GM10248 (cell line): ENCODE measurements at regions of chr10 and their contacts with region 1.

Region 1: GRCh38 chr10:4849555-4850242 is 23.7 kb downstream of the AKR1E2 start:
- DNase-seq: peak; percentile 65
- CTCF ChIP-seq: peak; percentile 100

Region 2: DNA sequence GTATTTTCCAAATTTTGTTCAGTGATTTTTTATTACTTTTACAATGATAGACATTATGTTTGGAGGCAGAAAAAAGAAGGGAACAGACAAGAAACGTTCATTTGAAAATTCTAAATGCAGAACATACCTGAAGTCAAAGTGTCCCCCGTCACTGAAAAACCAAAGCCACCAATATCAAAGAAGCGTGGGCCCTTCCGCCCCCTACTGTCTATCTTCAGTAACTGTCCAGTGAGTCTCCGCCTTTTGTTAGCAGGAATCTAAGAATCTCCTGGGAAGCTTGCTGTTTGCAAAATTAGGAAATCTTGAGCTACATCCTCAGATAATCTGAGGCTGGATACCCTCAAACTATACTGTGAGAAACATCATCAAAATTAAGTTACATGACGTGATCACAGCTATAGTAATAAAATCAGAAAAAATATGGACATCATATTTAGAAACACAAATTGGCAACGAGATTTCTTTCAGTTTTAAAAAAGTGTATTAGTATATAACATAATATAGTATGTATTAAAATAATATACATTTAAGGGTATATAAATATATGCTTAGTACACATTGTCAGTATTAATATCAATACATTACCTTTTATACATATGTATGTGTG is 193.0 kb before region 1 on chr10:
- CTCF ChIA-PET with region 1: no interaction called
- POLR2A ChIA-PET with region 1: no interaction called
- DNase-seq: peak; percentile 38
- CTCF ChIP-seq: peak; percentile 75

Region 3: GRCh38 chr10:4825851-4826665 is 23.6 kb before region 1 on chr10 and contains the start of gene AKR1E2:
- CTCF ChIA-PET with region 1: interaction called, 112 read pairs
- POLR2A ChIA-PET with region 1: no interaction called
- DNase-seq: peak; percentile 39
- CTCF ChIP-seq: no peak

Region 4: GRCh38 chr10:4892681-4893080 is 43.0 kb after region 1 on chr10:
- CTCF ChIA-PET with region 1: interaction called, 15 read pairs
- POLR2A ChIA-PET with region 1: no interaction called
- DNase-seq: no peak
- CTCF ChIP-seq: no peak

Region 5: GRCh38 chr10:5271526-5271925 is 421.8 kb after region 1 on chr10:
- CTCF ChIA-PET with region 1: no interaction called
- POLR2A ChIA-PET with region 1: no interaction called
- DNase-seq: no peak
- CTCF ChIP-seq: no peak

Region 6: DNA sequence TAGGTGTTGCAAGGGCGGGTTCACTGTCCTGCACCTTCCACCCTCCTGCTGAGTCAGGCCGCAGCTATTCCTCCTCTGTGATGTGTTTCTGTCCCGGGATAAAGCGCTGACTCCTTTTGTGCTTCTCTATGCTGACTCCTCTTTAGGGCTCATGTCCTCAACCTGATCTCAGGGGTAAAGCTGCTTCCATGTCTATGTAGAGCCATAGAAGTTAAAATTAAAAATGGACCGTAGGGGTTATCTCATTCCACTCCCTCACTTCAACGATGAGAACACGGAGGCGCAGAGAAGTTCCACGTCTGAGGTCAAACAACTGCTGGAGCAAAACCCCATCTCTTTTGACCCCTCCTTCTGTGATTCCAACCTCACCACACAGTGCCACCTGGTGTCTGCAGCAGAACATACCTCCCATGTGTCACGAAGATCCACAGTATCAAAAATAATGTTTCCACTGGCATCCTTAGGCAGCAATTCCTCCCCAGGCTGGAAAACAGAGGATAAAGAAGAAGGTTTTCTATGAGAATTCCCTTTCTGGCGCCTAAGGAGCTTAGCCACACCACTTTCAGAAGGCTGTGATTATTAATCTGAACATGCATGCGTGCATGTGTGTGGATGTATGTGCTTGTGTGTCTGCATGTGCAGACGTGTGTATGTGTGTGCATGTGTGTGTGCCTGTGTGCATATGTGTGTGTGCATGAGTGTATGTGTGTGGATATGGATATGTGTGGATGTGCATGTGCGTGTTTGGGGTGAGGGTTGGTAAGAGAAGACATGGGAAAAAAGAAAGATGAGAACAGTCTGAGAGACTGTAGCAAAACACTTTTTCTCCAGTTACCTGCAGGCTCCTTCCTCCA is 433.8 kb after region 1 on chr10:
- CTCF ChIA-PET with region 1: interaction called, 36 read pairs
- POLR2A ChIA-PET with region 1: no interaction called
- DNase-seq: no peak
- CTCF ChIP-seq: peak; percentile 44

Region 7: DNA sequence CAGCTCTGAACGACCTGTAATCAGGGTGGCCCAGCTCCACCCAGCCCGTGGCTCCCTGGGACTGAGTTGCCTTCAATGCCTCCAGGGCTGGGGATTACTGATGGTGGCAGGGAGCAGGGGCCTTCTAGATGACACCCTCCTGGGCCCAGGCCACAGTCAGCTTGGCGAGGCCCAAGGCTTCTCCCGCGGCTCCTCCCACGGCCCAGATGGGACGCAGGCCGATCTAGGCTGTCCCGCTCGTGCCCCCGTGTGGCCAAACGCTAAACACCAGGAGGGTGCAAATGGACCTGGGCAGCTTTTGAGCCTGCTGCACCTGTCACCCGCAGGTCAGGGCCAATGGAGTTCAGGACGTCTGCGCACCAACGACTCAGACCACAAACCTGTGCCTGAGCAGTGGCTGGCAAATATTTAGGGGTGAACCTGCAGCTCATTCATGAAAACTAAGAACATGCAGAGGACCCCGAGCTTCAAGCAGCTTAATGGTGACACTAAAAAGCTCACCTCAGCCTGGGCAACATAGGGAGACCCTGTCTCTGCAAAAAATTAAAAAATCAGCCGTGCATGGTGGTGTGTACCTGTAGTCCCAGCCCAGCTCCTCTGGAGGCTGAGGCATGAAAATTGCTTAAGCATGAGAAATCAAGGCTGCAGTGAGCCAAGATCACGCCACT is 773.5 kb after region 1 on chr10:
- CTCF ChIA-PET with region 1: interaction called, 40 read pairs
- POLR2A ChIA-PET with region 1: no interaction called
- DNase-seq: peak; percentile 89
- CTCF ChIP-seq: peak; percentile 92